ENCODE measurements at regions of chr15 and their contacts with region 1.

Region 1: GRCh38 chr15:55241891-55242290 is 45.1 kb upstream of the RSL24D1 start:
- DNase-seq: no peak
- ATAC-seq: no peak
- H3K4me3 ChIP-seq: no peak overlapping the region
- H3K27ac ChIP-seq: no peak overlapping the region; the same call in 2 of the 3 replicates
- H3K4me1 ChIP-seq: peaks cover 0 to 43% of the 10 kb centered on the region in 2 experiments; a peak in 3 of 5 replicates
- H3K27me3 ChIP-seq: no peaks in the 10 kb centered on the region
- CTCF ChIP-seq: no peak
- EP300 ChIP-seq: no peak
- POLR2A ChIP-seq: no peak
- RAD21 ChIP-seq: no peak

Region 2: DNA sequence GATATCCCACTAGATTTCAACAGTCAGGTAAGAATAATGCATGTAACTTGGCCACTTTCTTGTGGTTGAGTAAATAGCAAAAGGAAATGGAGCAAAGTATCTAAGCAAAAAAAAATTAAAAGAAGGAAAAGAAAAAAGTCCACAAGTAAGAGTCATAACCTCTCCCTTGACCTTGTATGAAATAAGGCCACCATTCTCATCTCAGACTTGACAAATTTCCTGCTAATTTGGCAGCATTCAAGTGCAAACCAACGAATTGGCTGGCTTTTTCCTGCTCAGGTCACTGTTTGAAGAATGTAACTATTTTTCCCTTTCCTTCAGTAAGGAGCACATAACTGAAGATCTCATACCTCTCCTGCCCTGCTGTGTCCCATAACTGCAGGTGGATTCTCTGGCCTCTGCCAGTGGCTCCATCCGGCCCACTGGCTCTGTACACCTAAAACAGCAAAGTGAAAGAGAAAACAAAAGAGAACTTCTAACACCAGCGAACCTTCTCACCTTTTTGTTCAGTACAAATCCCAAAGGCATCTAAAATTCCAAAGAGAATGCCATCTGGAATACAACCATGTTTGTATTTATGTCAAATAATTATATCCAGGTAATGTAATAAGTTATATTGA is 11.7 kb before region 1 on chr15:
- CTCF ChIA-PET with region 1: no interaction called
- POLR2A ChIA-PET with region 1: interaction called, 11 read pairs
- in situ Hi-C with region 1: no loop called
- intact Hi-C with region 1: no loop called
- DNase-seq: no peak
- ATAC-seq: no peak
- H3K4me3 ChIP-seq: no peak overlapping the region
- H3K27ac ChIP-seq: no peak overlapping the region; the same call in 2 of the 3 replicates
- H3K4me1 ChIP-seq: peaks cover 4 to 13% of the 10 kb centered on the region in 2 experiments; a peak in 2 of 5 replicates
- H3K27me3 ChIP-seq: no peaks in the 10 kb centered on the region
- CTCF ChIP-seq: no peak
- EP300 ChIP-seq: no peak
- POLR2A ChIP-seq: no peak
- RAD21 ChIP-seq: no peak

Region 3: GRCh38 chr15:55279746-55280351 is 38.0 kb after region 1 on chr15:
- CTCF ChIA-PET with region 1: no interaction called
- POLR2A ChIA-PET with region 1: interaction called, 3 read pairs
- in situ Hi-C with region 1: loop called (anchors 5 kb)
- intact Hi-C with region 1: loop called (anchors 2 kb)
- DNase-seq: peak; percentile 70 to 91 (median 73)
- ATAC-seq: peak; percentile 81
- H3K4me3 ChIP-seq: no peak overlapping the region
- H3K27ac ChIP-seq: peak overlapping the region; percentile 86
- H3K4me1 ChIP-seq: peaks cover 32 to 69% of the 10 kb centered on the region in 2 experiments
- H3K27me3 ChIP-seq: no peaks in the 10 kb centered on the region
- CTCF ChIP-seq: no peak
- EP300 ChIP-seq: peak; percentile 88
- POLR2A ChIP-seq: no peak
- RAD21 ChIP-seq: no peak

Measured in K562 (cell line).